ENCODE measurements at regions of chr14 and their contacts with region 1.

Region 1: DNA sequence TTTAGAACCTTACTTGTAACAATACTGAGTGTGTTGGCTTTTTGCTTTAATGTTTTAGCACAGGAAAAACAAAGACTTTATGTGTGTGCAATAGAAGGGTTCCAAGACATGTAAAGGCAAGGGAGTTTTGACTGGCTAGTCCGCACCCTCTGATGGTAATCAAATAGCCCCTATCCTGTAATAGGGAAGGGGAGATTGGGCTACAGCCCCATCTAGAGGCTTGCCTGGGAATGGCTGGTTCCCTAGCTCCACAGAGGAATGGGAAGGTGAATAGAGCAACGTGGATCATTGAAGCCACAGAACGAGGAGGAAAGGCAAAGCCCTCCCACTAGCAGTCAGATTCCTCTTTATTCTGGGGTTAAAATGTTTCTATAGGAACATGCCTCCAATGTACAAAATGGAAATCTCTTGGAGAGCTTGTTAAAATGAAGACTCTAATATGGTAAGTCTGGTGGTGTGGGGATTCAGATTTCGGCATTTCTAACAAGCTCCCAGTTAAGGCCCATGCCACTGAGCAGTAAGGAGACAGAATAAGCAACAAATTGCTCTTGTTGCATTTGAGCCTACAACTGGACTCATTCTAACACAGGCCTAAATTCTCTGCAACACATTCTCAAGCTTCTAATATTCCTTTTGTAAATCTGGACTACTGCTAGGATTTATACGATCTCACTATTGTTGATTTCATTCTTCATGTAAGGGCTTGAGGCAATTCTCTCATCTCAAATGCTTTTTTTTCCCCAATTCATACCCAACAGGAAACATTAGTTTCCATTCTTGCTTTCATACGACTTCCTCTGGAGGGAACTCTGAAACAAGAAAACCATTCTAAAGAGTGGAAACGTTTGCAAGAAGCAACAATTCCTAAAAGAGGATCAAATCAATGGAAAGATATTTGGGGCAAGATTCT is 57.1 kb downstream of the NIN start:
- DNase-seq: peak; percentile 83
- ATAC-seq: peak; percentile 98
- H3K4me3 Mint-ChIP-seq: no peak overlapping the region
- H3K27ac Mint-ChIP-seq: peak overlapping the region; percentile 43
- H3K4me1 Mint-ChIP-seq: peaks cover 12% of the 10 kb centered on the region
- H3K27me3 Mint-ChIP-seq: no peaks in the 10 kb centered on the region
- CTCF ChIP-seq: peak; percentile 72

Region 2: GRCh38 chr14:50599700-50600444 is 174.0 kb before region 1 on chr14:
- CTCF ChIA-PET with region 1: interaction called, 33 read pairs
- POLR2A ChIA-PET with region 1: no interaction called
- DNase-seq: no peak
- ATAC-seq: peak; percentile 78
- H3K4me3 Mint-ChIP-seq: no peak overlapping the region
- H3K27ac Mint-ChIP-seq: 0 out of 2 replicates have a peak overlapping the region, but pooled peaks have one; percentile 39
- H3K4me1 Mint-ChIP-seq: peaks cover 19% of the 10 kb centered on the region
- H3K27me3 Mint-ChIP-seq: no peaks in the 10 kb centered on the region
- CTCF ChIP-seq: no peak

Region 3: GRCh38 chr14:50619556-50620141 is 154.2 kb before region 1 on chr14:
- CTCF ChIA-PET with region 1: interaction called, 12 read pairs
- POLR2A ChIA-PET with region 1: no interaction called
- DNase-seq: no peak
- ATAC-seq: peak; percentile 71
- H3K4me3 Mint-ChIP-seq: no peak overlapping the region
- H3K27ac Mint-ChIP-seq: no peak overlapping the region; the same call in 1 of the 2 replicates
- H3K4me1 Mint-ChIP-seq: no peaks in the 10 kb centered on the region
- H3K27me3 Mint-ChIP-seq: no peaks in the 10 kb centered on the region
- CTCF ChIP-seq: 0 out of 2 replicates have a peak, but pooled peaks have one; percentile 31

Region 4: GRCh38 chr14:50697659-50698290 is 76.1 kb before region 1 on chr14:
- CTCF ChIA-PET with region 1: no interaction called
- POLR2A ChIA-PET with region 1: no interaction called
- DNase-seq: no peak
- ATAC-seq: no peak
- H3K4me3 Mint-ChIP-seq: no peak overlapping the region
- H3K27ac Mint-ChIP-seq: no peak overlapping the region
- H3K4me1 Mint-ChIP-seq: no peaks in the 10 kb centered on the region
- H3K27me3 Mint-ChIP-seq: peaks cover 9% of the 10 kb centered on the region; the same call in 1 of the 2 replicates
- CTCF ChIP-seq: no peak

Region 5: GRCh38 chr14:50756300-50756699 is 17.6 kb before region 1 on chr14:
- CTCF ChIA-PET with region 1: interaction called, 15 read pairs
- POLR2A ChIA-PET with region 1: no interaction called
- DNase-seq: no peak
- ATAC-seq: no peak
- H3K4me3 Mint-ChIP-seq: no peak overlapping the region
- H3K27ac Mint-ChIP-seq: no peak overlapping the region
- H3K4me1 Mint-ChIP-seq: no peaks in the 10 kb centered on the region
- H3K27me3 Mint-ChIP-seq: no peaks in the 10 kb centered on the region
- CTCF ChIP-seq: no peak

Region 6: GRCh38 chr14:50762001-50762930 is 11.6 kb before region 1 on chr14:
- CTCF ChIA-PET with region 1: interaction called, 15 read pairs
- POLR2A ChIA-PET with region 1: no interaction called
- DNase-seq: no peak
- ATAC-seq: no peak
- H3K4me3 Mint-ChIP-seq: no peak overlapping the region
- H3K27ac Mint-ChIP-seq: no peak overlapping the region
- H3K4me1 Mint-ChIP-seq: no peaks in the 10 kb centered on the region
- H3K27me3 Mint-ChIP-seq: no peaks in the 10 kb centered on the region
- CTCF ChIP-seq: no peak

Region 7: DNA sequence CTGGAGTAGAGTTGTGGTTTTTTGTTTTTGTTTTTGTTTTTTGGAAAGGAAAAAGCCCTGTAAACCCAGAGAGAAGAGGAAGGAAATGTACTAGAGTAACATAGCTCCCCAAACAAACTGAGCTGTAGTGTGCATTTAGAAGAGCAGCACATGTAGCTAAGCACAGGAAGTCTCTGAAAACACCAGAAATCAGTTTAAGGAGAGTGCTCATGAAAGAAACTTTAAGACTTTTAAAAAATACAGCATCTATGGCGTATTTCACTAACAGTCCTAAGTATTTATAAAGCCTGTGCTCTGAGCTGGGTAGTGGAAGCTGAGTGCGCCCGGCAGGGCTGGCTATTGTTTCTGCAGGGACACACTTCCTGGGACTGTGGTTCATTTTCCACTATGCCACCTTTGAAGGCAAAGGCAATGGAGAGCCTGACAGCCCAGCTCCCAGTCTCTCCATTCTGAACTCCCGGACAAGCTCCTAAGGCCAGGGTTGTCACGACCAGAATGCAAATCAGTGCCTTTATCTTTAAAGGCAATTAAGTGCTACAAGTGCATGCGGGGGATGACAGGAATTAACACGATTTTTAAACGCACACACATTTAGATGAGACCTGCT is 11.7 kb after region 1 on chr14:
- CTCF ChIA-PET with region 1: interaction called, 27 read pairs
- POLR2A ChIA-PET with region 1: no interaction called
- DNase-seq: no peak
- ATAC-seq: peak; percentile 73
- H3K4me3 Mint-ChIP-seq: no peak overlapping the region
- H3K27ac Mint-ChIP-seq: peak overlapping the region; percentile 79; the same call in 1 of the 2 replicates
- H3K4me1 Mint-ChIP-seq: peaks cover 46% of the 10 kb centered on the region
- H3K27me3 Mint-ChIP-seq: no peaks in the 10 kb centered on the region
- CTCF ChIP-seq: no peak

Region 8: GRCh38 chr14:50839048-50839447 is 65.2 kb after region 1 on chr14:
- CTCF ChIA-PET with region 1: no interaction called
- POLR2A ChIA-PET with region 1: no interaction called
- DNase-seq: no peak
- ATAC-seq: no peak
- H3K4me3 Mint-ChIP-seq: no peak overlapping the region
- H3K27ac Mint-ChIP-seq: no peak overlapping the region
- H3K4me1 Mint-ChIP-seq: peaks cover 2% of the 10 kb centered on the region; the same call in 1 of the 2 replicates
- H3K27me3 Mint-ChIP-seq: peaks cover 12% of the 10 kb centered on the region
- CTCF ChIP-seq: no peak

Measured in WTC11 (cell line).